ENCODE measurements at regions of chr3 and their contacts with region 1.

Region 1: DNA sequence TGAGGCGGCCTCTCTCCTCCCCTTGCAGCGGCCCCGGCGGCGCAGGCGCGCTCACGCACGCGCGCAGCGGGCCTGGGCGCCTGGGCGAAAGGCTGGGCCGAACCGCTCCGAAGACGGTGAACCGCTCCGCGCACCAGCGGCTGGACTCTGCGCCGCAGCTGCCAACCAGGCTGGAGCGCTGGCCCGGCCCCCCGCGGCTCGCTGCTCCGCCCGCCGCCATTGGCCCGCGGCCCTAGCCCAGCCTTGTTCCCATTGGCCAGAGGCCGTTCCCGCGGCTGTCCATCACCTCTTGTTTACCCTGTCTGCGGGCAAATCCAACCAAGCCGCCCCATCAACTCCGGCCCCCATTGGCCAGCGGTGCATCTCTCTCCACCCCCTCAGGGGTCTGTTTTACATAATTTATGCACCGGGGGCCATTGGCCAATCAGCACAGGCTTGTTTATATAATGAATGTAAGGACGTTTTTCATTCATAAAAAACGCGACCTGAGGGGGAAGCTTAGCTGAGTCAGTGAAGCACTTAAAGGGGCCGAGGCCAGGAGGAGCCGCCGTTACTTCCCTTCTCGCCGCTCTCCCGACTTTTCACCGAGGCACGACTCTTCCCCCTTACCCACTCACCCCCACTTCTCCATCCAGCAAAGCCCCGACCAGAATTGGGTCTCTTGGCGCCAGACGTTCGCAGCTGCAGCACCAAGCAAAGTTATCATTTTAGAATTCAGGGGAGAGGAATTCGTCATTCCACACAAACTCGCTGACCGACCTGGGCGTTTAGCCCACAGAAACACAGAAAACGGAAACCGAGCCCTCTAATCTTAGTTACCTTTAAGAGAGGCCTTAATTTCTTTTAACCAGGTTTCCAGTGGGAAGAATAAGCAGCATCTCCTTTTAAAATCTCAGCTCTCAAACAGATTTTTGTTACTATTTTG is at the start of gene ETV5:
- DNase-seq: peak; percentile 99
- ATAC-seq: peak; percentile 95
- H3K4me3 Mint-ChIP-seq: peak within 1 kb of the TSS; percentile 97
- H3K27ac Mint-ChIP-seq: peak within 1 kb of the TSS; percentile 98
- H3K4me1 Mint-ChIP-seq: peaks cover 32% of the 10 kb centered on the region
- H3K27me3 Mint-ChIP-seq: peaks cover 61% of the 10 kb centered on the region
- CTCF ChIP-seq: no peak
- total RNA-seq, gene ETV5: 52.9 to 71.3 TPM (median 62.1 TPM) in 3 replicates

Region 2: GRCh38 chr3:185959609-185960517 is 149.3 kb before region 1 on chr3:
- CTCF ChIA-PET with region 1: no interaction called
- POLR2A ChIA-PET with region 1: no interaction called
- DNase-seq: no peak
- ATAC-seq: no peak
- H3K4me3 Mint-ChIP-seq: no peak overlapping the region
- H3K27ac Mint-ChIP-seq: no peak overlapping the region
- H3K4me1 Mint-ChIP-seq: no peaks in the 10 kb centered on the region
- H3K27me3 Mint-ChIP-seq: no peaks in the 10 kb centered on the region
- CTCF ChIP-seq: no peak

Region 3: GRCh38 chr3:186097663-186098451 is 11.3 kb before region 1 on chr3:
- CTCF ChIA-PET with region 1: interaction called, 12 read pairs
- POLR2A ChIA-PET with region 1: interaction called, 21 read pairs
- DNase-seq: peak; percentile 80
- ATAC-seq: peak; percentile 82
- H3K4me3 Mint-ChIP-seq: peak overlapping the region; percentile 82
- H3K27ac Mint-ChIP-seq: peak overlapping the region; percentile 98
- H3K4me1 Mint-ChIP-seq: peaks cover 82% of the 10 kb centered on the region
- H3K27me3 Mint-ChIP-seq: no peaks in the 10 kb centered on the region
- CTCF ChIP-seq: no peak

Region 4: GRCh38 chr3:186121968-186122367 is 12.8 kb after region 1 on chr3:
- CTCF ChIA-PET with region 1: no interaction called
- POLR2A ChIA-PET with region 1: interaction called, 12 read pairs
- DNase-seq: peak; percentile 54
- ATAC-seq: peak; percentile 84
- H3K4me3 Mint-ChIP-seq: peak overlapping the region; percentile 44
- H3K27ac Mint-ChIP-seq: peak overlapping the region; percentile 87
- H3K4me1 Mint-ChIP-seq: peaks cover 60% of the 10 kb centered on the region
- H3K27me3 Mint-ChIP-seq: peaks cover 18% of the 10 kb centered on the region
- CTCF ChIP-seq: no peak

Region 5: DNA sequence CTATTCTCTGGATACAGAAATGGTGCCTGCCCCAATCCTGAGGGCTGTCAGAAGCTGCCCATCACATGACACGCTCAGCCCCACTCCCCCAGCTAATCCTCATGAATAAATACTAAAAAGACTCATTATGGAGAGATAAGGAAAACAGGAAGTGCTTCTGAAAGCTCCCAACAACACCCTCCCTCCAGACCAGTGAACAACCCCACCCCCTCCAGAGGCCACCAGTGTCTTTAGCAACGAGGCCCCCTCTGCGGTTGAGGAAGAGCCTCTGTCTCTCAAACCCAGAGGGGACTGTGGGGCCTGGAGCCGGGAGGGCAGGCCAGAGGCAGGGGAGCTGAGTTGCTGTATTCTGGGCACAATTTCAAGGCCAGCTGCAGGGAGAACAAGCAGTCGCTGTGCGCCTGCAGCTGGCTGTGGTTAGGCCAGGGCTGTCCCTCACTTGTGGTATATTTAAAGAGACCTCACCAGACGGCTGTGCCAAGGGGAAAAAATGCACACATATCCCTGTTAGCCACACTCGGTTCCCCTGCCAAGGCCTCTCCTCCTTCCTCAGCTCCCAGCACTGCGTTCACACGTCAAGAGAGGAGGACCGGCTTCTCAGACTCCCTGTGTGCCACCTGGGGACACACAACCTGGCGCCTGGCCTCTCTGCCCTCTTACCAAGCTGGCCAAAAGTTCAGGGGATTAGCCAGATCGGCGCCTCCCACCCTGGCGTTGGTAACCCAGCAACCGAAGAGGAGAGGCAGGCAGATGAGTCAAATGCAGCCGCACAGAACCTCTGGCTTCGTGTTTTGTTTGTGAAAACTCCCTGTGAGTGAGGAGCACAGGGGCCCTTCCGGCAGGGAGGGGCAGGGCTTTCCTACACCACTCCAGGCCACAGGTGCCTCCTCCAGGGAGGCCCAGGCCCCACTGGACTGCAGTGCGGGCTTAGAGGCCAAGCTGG is 100.9 kb after region 1 on chr3:
- CTCF ChIA-PET with region 1: interaction called, 10 read pairs
- POLR2A ChIA-PET with region 1: interaction called, 3 read pairs
- DNase-seq: peak; percentile 26
- ATAC-seq: peak; percentile 83
- H3K4me3 Mint-ChIP-seq: no peak overlapping the region
- H3K27ac Mint-ChIP-seq: peak overlapping the region; percentile 67; the same call in 1 of the 2 replicates
- H3K4me1 Mint-ChIP-seq: peaks cover 49% of the 10 kb centered on the region
- H3K27me3 Mint-ChIP-seq: no peaks in the 10 kb centered on the region
- CTCF ChIP-seq: no peak

Measured in WTC11 (cell line).